ENCODE measurements at regions of chr2 and their contacts with region 1.

Region 1: DNA sequence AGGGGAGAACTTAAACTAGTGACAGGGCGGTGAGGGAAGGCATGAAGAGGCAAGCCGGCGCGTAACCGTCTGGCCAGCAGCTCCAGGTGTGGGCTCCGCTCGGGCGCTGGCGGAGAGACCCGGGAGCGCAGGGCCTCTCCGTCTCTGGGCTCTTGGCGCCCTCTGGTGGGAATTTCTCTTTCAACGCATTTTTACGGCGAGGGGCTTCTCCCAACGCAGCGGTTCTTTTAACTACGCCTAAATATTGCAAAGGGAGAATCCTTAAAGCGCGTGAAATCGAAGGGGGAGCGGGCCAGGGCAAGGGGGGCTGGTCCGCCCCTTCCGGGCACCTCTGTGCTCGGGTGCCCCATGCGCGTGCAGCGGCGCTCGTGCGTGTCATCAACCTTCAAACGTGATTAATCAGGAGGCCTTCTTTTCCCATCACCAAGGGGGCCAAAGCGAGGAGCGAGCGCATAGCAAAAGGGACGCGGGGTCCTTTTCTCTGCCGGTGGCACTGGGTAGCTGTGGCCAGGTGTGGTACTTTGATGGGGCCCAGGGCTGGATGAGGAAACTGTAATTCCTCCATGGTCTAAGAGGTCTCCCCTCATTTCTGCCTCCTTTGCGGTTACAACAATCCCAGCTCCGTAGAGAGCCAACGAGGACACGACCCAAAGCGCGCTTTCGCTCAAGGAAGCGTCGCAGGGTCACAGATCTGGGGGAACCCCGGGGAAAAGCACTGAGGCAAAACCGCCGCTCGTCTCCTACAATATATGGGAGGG is 762 bp upstream of the GAD1 start:
- DNase-seq: peak; percentile 40 to 70 (median 70)
- H3K4me3 ChIP-seq: peak overlapping the region; percentile 36
- H3K27ac ChIP-seq: no peak overlapping the region
- H3K4me1 ChIP-seq: peaks cover 6% of the 10 kb centered on the region
- H3K27me3 ChIP-seq: peaks cover 4% of the 10 kb centered on the region
- CTCF ChIP-seq: peak; percentile 57 to 61 (median 58)
- EP300 ChIP-seq: no peak
- POLR2A ChIP-seq: no peak

Region 2: DNA sequence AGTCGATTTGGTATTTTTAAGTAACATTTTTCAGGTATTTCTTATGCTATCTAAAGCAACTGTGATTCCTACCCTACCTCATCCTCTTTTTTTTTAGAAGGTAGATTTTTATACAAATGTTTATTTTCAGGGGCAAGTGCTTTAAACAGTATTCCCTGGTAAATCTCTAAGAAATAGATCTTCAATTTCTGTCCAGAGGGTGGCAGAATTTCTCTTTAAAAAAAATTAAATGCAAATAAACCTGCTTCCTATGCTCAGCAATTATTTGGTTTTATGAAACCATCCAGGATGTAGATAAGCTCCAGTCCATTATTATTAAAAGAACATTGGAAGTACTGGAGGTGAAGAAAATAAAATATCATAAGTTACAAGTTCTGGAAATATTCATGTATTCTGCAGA is 446.0 kb before region 1 on chr2:
- intact Hi-C with region 1: loop called in 2 of 4 experiments (anchors 10 kb)
- DNase-seq: no peak
- H3K4me3 ChIP-seq: no peak overlapping the region
- H3K27ac ChIP-seq: no peak overlapping the region
- H3K4me1 ChIP-seq: no peaks in the 10 kb centered on the region
- H3K27me3 ChIP-seq: no peaks in the 10 kb centered on the region
- CTCF ChIP-seq: no peak
- EP300 ChIP-seq: no peak
- POLR2A ChIP-seq: no peak

Region 3: DNA sequence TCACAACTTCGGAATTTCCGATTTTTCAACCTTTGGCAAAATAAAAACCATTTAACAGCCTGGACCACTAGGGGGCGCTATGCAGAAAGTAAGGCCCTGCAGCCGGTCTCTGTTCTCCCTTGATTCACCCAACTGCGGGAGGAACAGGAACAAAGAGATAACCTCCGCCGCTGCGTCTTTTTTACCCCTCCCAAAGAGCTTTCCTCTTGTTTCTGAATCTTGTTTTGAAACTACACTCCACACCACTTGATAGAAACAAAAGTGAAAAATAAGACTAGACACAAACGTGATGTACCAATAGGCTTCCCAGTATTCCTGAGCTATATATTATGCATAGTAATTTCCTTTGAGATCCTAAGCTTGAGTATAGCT is 406.8 kb before region 1 on chr2:
- intact Hi-C with region 1: loop called in 2 of 4 experiments (anchors 5 to 10 kb)
- DNase-seq: peak; percentile 59 to 70 (median 63)
- H3K4me3 ChIP-seq: no peak overlapping the region
- H3K27ac ChIP-seq: no peak overlapping the region
- H3K4me1 ChIP-seq: no peaks in the 10 kb centered on the region
- H3K27me3 ChIP-seq: no peaks in the 10 kb centered on the region
- CTCF ChIP-seq: peak; percentile 20 to 64 (median 61)
- EP300 ChIP-seq: no peak
- POLR2A ChIP-seq: no peak

Region 4: DNA sequence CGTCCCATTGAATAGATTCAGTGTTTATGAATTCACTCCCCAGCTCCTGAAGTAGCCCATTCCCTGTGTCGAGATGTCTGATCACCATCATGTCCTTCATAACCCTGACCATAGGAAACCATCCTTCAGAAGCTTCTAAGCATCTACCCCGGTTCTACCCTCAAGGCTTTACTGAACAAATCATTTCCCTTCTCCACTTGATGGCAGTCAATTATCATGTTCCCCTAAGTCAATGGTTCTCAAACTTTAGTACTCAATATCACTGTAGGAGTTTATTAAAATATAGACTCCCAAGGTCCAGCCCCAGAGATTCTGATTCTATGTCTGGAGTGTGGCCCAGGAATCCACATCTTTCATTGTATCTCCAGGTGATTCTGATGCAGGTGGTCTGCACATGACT is 329.2 kb before region 1 on chr2:
- intact Hi-C with region 1: loop called in 1 of 4 experiments (anchors 10 kb)
- DNase-seq: no peak
- H3K4me3 ChIP-seq: no peak overlapping the region
- H3K27ac ChIP-seq: no peak overlapping the region
- H3K4me1 ChIP-seq: no peaks in the 10 kb centered on the region
- H3K27me3 ChIP-seq: no peaks in the 10 kb centered on the region
- CTCF ChIP-seq: no peak
- EP300 ChIP-seq: no peak
- POLR2A ChIP-seq: no peak

Region 5: GRCh38 chr2:170587922-170588321 is 228.0 kb before region 1 on chr2:
- intact Hi-C with region 1: no loop called
- DNase-seq: no peak
- H3K4me3 ChIP-seq: no peak overlapping the region
- H3K27ac ChIP-seq: no peak overlapping the region
- H3K4me1 ChIP-seq: no peaks in the 10 kb centered on the region
- H3K27me3 ChIP-seq: no peaks in the 10 kb centered on the region
- CTCF ChIP-seq: no peak
- EP300 ChIP-seq: no peak
- POLR2A ChIP-seq: no peak

Region 6: DNA sequence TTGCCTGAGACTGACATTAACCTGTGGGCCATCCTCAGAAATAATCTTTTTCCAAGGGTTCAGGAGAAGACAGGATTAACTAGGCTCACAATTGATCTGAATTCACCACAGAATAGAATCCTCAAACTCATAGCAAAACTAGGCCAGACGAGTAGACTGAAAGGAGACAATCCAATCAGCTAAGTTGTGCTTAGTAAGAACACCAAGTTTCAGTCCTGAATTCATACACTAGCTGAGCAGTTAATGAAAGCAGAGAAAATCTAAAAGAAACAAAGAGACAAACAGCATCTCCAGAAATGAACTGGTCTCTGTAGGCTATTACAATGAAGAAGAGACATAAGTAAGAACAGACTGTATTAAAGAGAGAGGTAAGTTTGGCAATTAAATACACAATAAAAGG is 202.6 kb after region 1 on chr2:
- intact Hi-C with region 1: no loop called
- DNase-seq: no peak
- H3K4me3 ChIP-seq: no peak overlapping the region
- H3K27ac ChIP-seq: no peak overlapping the region
- H3K4me1 ChIP-seq: no peaks in the 10 kb centered on the region
- H3K27me3 ChIP-seq: no peaks in the 10 kb centered on the region
- CTCF ChIP-seq: no peak
- EP300 ChIP-seq: no peak
- POLR2A ChIP-seq: no peak

Region 7: DNA sequence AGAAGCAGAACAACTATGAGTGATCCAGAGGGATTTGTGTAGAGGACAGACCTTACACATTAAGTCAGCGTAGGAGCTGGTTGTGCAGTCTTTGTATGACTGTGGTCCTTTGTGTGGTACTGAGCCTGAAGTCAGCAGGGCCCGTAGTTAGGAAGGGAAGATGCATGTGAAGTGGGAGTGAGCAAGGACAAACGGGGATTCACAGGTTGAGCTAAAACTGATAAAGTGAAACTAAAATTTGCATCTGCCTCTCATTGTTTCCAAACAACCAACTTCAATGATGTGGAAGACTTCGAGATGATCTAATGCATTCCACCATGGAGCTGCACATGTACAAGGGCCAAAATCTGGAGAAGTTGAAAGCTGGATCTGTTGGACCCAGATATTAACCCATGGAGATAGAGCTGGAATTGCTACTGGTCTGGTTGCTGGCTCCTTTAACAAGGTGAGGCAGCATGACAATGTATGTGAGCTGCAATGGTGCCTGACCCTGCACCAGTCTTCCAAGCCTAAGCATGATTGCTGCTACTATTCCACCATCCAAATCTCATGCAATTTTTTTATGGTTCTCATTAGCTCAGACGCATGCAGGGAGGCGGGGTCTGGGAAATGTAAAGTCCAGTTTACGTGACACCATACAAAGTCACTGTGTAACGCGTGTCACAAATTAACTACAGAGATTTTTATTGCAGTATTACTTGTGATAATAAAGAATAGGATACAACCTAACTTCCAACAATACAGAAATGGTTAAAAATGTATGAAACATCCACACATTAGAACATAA is 694.2 kb after region 1 on chr2:
- intact Hi-C with region 1: no loop called
- DNase-seq: no peak
- H3K4me3 ChIP-seq: no peak overlapping the region
- H3K27ac ChIP-seq: no peak overlapping the region
- H3K4me1 ChIP-seq: no peaks in the 10 kb centered on the region
- H3K27me3 ChIP-seq: no peaks in the 10 kb centered on the region
- CTCF ChIP-seq: no peak
- EP300 ChIP-seq: no peak
- POLR2A ChIP-seq: no peak